ENCODE measurements at regions of chrX and their contacts with region 1.

Region 1: DNA sequence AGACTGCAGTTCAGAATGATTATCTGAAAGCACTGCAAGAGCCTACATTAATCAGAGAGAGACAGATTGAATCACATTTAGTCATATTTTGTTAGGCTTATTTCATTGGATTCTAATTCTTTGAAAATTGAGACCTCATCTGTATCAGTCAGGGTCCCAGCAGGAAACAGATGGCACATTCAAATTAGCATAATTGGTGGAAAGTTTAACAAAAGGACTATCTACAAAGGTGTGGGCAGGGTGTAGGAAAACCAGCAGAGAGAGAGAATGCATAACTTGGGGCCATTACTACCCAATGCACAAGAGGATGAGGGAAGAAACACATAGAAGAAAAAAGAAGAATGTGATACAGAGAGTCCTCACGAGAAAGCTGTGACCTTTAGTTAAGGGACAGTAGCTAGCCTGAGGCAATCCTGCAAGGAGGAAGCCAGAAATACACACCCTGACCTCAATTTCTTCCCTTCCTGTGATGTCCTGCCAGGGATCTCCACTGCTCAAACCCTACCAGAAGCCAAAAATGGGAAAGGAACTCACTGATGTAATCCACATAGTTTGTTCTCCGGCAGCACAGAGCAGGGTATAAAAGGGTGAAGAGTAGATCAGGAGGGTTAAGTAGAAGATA is 17.7 kb upstream of the XKRX start:
- DNase-seq: no peak
- H3K4me3 ChIP-seq: no peak overlapping the region
- H3K27ac ChIP-seq: no peak overlapping the region
- H3K4me1 ChIP-seq: no peaks in the 10 kb centered on the region
- CTCF ChIP-seq: no peak

Region 2: GRCh38 chrX:100935767-100936166 is 10.6 kb before region 1 on chrX:
- CTCF ChIA-PET with region 1: no interaction called
- POLR2A ChIA-PET with region 1: no interaction called
- intact Hi-C with region 1: no loop called
- DNase-seq: no peak
- H3K4me3 ChIP-seq: no peak overlapping the region
- H3K27ac ChIP-seq: no peak overlapping the region
- H3K4me1 ChIP-seq: peaks cover 16% of the 10 kb centered on the region
- CTCF ChIP-seq: no peak

Region 3: GRCh38 chrX:101117701-101118100 is 171.3 kb after region 1 on chrX:
- CTCF ChIA-PET with region 1: no interaction called
- POLR2A ChIA-PET with region 1: interaction called, 10 read pairs
- intact Hi-C with region 1: no loop called
- DNase-seq: no peak
- H3K4me3 ChIP-seq: no peak overlapping the region
- H3K27ac ChIP-seq: no peak overlapping the region
- H3K4me1 ChIP-seq: no peaks in the 10 kb centered on the region
- CTCF ChIP-seq: no peak